Adrenal gland (tissue), 19 donors: ENCODE measurements at regions of chr3 and their contacts with region 1.

Region 1: DNA sequence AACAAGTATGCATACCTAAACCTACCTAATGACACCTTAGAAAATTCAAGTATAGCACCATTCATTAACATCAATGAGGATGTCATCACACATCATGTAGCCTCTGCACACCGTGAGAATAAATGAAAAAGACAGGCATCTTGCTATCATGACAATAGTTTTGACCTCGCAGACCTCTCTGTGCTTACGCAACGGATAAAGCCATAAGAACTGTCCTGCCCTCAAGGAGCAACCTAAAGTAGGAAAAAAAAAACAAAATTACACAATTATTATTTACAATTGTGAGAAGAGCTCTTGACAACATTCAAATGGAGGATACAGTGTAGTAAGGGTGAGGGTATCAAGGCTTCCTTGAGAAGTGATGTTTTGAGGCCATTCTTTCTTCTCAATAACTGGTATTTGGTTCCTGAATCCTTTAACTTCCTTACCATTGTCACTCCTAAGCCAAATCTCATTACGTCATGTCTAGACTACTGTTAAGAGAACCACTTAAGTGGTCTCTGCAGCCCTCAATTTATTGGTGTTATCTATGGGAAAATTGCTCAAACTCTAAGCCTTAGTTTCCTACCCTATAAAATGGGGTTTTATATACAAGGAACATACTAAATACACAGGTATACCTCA is 7.0 kb upstream of the SETD5 start:
- DNase-seq: no peak
- H3K4me3 ChIP-seq: no peak overlapping the region
- H3K27ac ChIP-seq: no peak overlapping the region
- H3K4me1 ChIP-seq: peaks cover 12 to 51% of the 10 kb centered on the region in 2 donors
- H3K27me3 ChIP-seq: no peaks in the 10 kb centered on the region
- CTCF ChIP-seq: no peak
- POLR2A ChIP-seq: no peak

Region 2: DNA sequence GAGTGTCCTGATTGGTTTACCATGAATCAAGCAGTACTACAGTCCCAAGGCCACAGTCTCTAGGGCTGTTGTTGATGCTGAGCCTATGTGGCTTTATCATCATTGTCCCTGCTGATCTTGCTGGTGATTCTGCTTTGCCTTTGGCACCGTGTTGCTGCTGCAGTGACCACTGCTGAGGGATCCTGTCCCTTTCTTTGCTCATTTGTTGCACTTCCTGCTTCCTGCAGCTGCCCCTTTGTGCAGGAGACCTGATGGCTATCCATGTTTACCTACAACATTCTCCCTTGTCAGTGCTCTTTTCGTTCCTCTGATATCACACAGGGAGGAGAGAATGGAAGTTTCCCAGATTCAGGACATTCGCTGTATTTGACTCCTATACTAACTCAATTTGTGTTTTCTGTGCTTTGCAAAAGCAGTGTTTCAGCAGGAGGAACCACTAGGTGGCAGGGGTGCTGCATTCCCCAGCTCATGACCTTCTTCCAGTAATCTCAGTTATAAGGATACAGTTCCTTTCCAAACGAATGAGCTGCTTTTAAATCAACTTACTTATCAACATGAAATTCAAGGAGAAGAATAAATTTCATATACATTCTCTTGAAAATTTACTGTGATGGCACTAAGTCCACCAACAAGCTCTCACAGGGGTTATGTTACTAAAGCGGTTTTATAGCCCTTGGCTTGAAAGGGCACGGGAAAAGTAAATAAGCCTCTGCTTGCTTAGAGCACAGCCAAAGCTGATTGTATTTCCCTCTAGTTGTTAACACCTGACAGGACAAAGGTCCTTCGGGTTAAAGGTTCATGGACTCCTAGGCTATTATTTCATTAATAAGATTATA is 37.2 kb before region 1 on chr3:
- intact Hi-C with region 1: no loop called
- DNase-seq: peak; percentile 68 to 91 (median 82)
- H3K4me3 ChIP-seq: no peak overlapping the region
- H3K27ac ChIP-seq: peak overlapping the region in 3 of 5 donors; percentile 28 to 59 (median 50)
- H3K4me1 ChIP-seq: peaks cover 0 to 21% of the 10 kb centered on the region in 2 donors
- H3K27me3 ChIP-seq: no peaks in the 10 kb centered on the region
- CTCF ChIP-seq: peak; percentile 69 to 91 (median 88)
- POLR2A ChIP-seq: no peak

Region 3: GRCh38 chr3:9428411-9428810 is 38.0 kb after region 1 on chr3:
- intact Hi-C with region 1: loop called in 1 of 2 experiments (anchors 5 kb)
- DNase-seq: no peak
- H3K4me3 ChIP-seq: no peak overlapping the region
- H3K27ac ChIP-seq: peak overlapping the region in 1 of 5 donors; percentile 13
- H3K4me1 ChIP-seq: peaks cover 13 to 38% of the 10 kb centered on the region in 2 donors
- H3K27me3 ChIP-seq: no peaks in the 10 kb centered on the region
- CTCF ChIP-seq: no peak
- POLR2A ChIP-seq: no peak

Region 4: DNA sequence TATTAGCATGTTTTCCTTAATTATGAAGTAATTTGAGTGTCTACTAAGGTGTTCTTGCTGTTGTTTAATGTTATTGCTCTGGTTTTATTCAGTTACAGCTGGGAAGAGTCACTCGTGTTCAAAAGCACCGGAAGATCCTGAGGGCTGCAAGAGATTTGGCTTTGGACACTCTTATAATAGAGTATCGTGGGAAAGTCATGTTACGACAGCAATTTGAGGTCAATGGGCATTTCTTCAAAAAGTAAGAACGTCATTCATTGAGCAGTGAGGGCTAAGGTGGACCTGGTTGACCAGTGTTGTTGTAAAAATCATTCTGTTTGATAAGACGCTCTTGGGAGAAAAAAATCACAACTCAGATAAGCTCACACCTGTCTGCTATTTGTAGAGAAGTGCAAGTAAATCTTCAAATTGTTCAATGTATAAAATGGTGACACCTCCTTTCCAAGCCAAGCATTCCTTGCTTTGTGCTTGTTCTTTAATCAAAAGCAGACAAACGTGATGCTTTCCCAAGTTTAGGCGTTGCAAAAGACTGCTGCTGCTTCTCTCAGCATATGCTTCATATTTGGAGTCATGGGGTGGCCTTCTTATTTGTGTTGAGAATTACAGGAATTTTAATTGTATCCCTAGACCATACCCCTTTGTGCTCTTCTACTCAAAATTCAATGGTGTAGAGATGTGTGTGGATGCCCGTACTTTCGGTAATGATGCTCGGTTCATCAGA is 51.3 kb after region 1 on chr3:
- intact Hi-C with region 1: loop called in 1 of 2 experiments (anchors 5 kb)
- DNase-seq: no peak
- H3K4me3 ChIP-seq: no peak overlapping the region
- H3K27ac ChIP-seq: no peak overlapping the region
- H3K4me1 ChIP-seq: peaks cover 0 to 16% of the 10 kb centered on the region in 2 donors
- H3K27me3 ChIP-seq: no peaks in the 10 kb centered on the region
- CTCF ChIP-seq: no peak
- POLR2A ChIP-seq: no peak

Region 5: GRCh38 chr3:9508781-9509180 is 118.4 kb after region 1 on chr3:
- intact Hi-C with region 1: no loop called
- DNase-seq: no peak
- H3K4me3 ChIP-seq: no peak overlapping the region
- H3K27ac ChIP-seq: no peak overlapping the region
- H3K4me1 ChIP-seq: no peaks in the 10 kb centered on the region
- H3K27me3 ChIP-seq: peaks cover 6% of the 10 kb centered on the region
- CTCF ChIP-seq: no peak
- POLR2A ChIP-seq: no peak